ENCODE measurements at regions of chr17 and their contacts with region 1.

Region 1: GRCh38 chr17:1638171-1638952 is 7.2 kb downstream of the SCARF1 start:
- DNase-seq: no peak
- H3K27ac ChIP-seq: no peak overlapping the region
- CTCF ChIP-seq: no peak

Region 2: DNA sequence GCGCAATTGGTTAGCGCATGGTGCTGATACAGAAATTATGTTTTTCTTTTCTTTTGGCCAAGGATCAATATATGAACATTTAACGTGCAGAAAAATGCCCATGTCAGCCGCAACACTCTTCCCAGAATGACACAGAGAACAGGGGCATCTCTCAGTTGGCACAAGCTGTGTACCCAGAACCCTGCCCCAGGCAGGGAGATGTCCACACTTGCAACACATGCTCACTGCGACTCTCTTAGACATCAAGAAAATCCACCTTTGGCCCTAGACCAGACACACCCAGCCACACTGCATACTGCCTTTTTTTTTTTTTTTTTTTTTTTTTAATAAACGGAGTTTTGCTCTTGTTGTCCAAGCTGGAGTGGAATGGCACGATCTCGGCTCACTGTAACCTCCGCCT is 92.7 kb before region 1 on chr17:
- CTCF ChIA-PET with region 1: no interaction called
- POLR2A ChIA-PET with region 1: no interaction called
- DNase-seq: peak; percentile 44
- H3K27ac ChIP-seq: peak overlapping the region; percentile 86
- CTCF ChIP-seq: no peak

Region 3: GRCh38 chr17:1606352-1607033 is 31.9 kb before region 1 on chr17:
- CTCF ChIA-PET with region 1: no interaction called
- POLR2A ChIA-PET with region 1: no interaction called
- DNase-seq: no peak
- H3K27ac ChIP-seq: peak overlapping the region; percentile 29; the same call in 1 of the 2 replicates
- CTCF ChIP-seq: no peak

Region 4: GRCh38 chr17:1648963-1649843 is 10.8 kb after region 1 on chr17:
- CTCF ChIA-PET with region 1: interaction called, 10 read pairs
- POLR2A ChIA-PET with region 1: no interaction called
- DNase-seq: peak; percentile 94
- H3K27ac ChIP-seq: peak overlapping the region; percentile 100
- CTCF ChIP-seq: peak; percentile 91

Region 5: DNA sequence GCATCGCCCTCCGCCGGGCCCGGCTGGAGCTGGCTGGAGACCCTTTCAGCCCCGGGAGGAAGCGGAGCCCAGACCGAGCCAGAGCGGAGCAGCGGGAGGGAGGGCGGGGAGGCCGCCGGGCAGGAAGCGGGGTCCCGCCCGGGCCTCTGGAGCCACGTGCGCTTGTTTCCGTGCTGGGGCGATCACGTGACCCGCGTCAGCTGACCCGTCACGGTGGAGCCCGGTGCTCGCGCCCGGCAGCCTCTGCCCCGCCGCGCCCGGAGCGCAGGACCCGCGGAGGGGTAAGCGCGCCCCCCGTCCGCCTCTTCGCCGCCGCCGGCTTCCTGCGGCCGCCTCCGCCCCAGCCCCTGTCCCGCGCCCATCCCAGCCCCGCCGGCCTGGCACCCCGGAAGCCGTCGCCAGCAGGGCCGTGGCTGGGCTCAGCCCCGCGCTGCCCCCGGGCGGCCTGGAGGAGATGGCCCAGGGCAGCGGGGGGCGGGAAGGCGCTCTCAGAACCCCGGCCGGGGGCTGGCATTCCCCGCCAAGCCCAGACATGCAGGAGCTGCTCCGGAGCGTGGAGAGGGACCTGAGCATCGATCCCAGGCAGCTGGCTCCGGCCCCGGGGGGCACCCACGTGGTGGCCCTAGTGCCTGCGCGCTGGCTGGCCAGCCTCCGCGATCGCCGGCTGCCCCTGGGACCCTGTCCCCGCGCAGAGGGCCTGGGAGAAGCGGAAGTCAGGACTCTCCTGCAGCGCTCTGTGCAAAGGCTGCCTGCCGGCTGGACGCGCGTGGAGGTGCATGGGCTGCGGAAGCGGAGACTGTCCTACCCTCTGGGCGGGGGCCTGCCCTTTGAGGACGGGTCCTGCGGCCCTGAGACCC is 86.4 kb after region 1 on chr17 and contains the start of gene WDR81:
- CTCF ChIA-PET with region 1: no interaction called
- POLR2A ChIA-PET with region 1: no interaction called
- DNase-seq: peak; percentile 77
- H3K27ac ChIP-seq: peak within 1 kb of the TSS; percentile 99
- CTCF ChIP-seq: peak; percentile 29

Measured in RWPE1 (cell line).